ENCODE measurements at regions of chr1 and their contacts with region 1.

Region 1: GRCh38 chr1:145845514-145846161 is at the start of gene NUDT17:
- DNase-seq: peak; percentile 79
- H3K4me3 Mint-ChIP-seq: no peak within 1 kb of the TSS
- H3K27ac Mint-ChIP-seq: no peak within 1 kb of the TSS
- H3K4me1 Mint-ChIP-seq: peaks cover 11% of the 10 kb centered on the region
- H3K27me3 Mint-ChIP-seq: no peaks in the 10 kb centered on the region
- total RNA-seq, gene NUDT17: 2.7 to 3.4 TPM

Region 2: GRCh38 chr1:145751491-145752037 is 94.1 kb before region 1 on chr1:
- CTCF ChIA-PET with region 1: no interaction called
- POLR2A ChIA-PET with region 1: no interaction called
- DNase-seq: no peak
- H3K4me3 Mint-ChIP-seq: no peak overlapping the region
- H3K27ac Mint-ChIP-seq: no peak overlapping the region
- H3K4me1 Mint-ChIP-seq: peaks cover 2% of the 10 kb centered on the region
- H3K27me3 Mint-ChIP-seq: no peaks in the 10 kb centered on the region

Region 3: GRCh38 chr1:145858894-145859490 is 13.4 kb after region 1 on chr1 and contains the start of gene PIAS3:
- CTCF ChIA-PET with region 1: interaction called, 141 read pairs
- POLR2A ChIA-PET with region 1: interaction called, 4 read pairs
- DNase-seq: peak; percentile 87
- H3K4me3 Mint-ChIP-seq: peak within 1 kb of the TSS; percentile 91
- H3K27ac Mint-ChIP-seq: peak within 1 kb of the TSS; percentile 88
- H3K4me1 Mint-ChIP-seq: peaks cover 24% of the 10 kb centered on the region
- H3K27me3 Mint-ChIP-seq: peaks cover 10% of the 10 kb centered on the region
- total RNA-seq, gene PIAS3: 17.9 to 18.8 TPM

Region 4: DNA sequence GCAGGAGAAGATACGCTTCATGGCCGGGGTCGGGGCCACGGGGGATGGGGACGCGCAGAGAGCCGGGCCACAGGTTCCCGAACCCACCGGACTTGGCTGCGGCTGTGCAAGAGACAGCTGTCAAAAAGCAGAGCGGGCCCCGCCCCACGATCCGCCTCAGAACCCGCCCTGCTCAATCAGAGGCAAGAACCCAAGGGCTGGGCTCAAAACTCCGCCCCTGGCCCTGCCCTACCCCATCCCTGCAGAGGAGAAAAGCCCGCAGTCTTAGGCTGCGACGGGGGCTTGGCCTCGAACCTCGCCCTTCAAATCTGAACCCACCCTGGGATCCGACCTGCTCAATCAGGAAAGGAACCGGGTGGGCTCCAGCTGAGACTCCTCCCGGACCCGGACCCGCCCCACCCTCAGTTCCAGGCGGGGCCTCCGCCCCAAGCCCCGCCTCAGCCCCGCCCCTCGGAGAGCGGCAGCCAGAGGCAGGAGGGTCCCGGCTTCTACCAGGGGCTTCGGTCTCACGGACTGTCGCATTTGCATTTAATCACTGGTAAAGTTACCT is 40.2 kb after region 1 on chr1 and contains the start of gene ANKRD35:
- CTCF ChIA-PET with region 1: interaction called, 11 read pairs
- POLR2A ChIA-PET with region 1: no interaction called
- DNase-seq: peak; percentile 92
- H3K4me3 Mint-ChIP-seq: peak within 1 kb of the TSS; percentile 77
- H3K27ac Mint-ChIP-seq: no peak within 1 kb of the TSS
- H3K4me1 Mint-ChIP-seq: peaks cover 14% of the 10 kb centered on the region
- H3K27me3 Mint-ChIP-seq: peaks cover 33% of the 10 kb centered on the region
- total RNA-seq, gene ANKRD35: 0.40 to 0.42 TPM

Region 5: DNA sequence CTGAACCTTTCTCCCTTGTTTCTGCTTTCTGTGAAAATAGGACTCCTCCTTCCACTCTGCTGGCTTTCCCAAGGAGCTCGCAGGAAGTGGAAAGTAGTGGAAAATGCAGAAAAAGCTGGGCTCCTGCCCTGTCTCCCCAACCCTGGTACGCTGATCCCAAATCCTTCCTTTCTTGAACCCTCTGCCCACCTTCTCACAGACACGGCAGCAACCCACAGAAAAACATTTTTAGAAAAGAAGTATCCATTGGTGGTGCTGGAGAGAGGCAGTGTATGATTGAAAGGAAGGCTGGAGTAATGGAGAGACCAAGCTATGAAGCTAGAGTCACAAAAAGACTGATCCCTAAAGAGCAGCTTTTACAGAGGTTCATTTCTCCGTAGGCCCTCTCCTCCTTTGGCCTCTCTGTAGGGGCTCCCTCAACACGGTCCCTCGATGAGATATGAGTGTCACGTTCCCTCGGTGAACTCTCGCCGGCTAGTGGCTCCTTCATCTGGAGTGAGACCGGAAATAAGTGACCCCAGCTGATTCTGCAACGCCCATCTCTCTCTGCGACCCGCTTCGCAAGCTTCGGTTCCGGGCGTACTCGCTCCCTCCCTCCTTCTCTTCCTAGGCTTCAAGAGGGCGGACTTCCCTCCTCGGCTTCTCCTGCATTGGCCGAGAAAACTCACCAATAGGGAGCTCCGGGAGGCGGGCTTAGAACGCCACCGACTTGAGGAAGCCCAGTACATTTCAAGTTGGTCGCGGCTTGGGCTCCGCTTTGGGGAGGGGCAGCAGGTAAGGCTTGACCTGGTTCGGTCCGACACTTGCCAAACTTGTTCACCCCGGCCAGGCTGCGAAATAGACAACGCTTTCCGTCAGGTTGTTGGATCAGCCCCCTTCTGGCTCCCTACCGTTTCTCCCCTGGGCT is 118.6 kb after region 1 on chr1 and contains the starts of genes ANKRD34A and POLR3GL:
- CTCF ChIA-PET with region 1: interaction called, 13 read pairs
- POLR2A ChIA-PET with region 1: no interaction called
- DNase-seq: peak; percentile 97
- H3K4me3 Mint-ChIP-seq: peak within 1 kb of the TSS; percentile 95
- H3K27ac Mint-ChIP-seq: peak within 1 kb of the TSS; percentile 89
- H3K4me1 Mint-ChIP-seq: peaks cover 54% of the 10 kb centered on the region
- H3K27me3 Mint-ChIP-seq: peaks cover 4% of the 10 kb centered on the region
- total RNA-seq, gene ANKRD34A: 2.0 to 2.2 TPM
- total RNA-seq, gene POLR3GL: 27.3 to 29.2 TPM

Region 6: GRCh38 chr1:146019231-146020057 is 173.8 kb after region 1 on chr1:
- CTCF ChIA-PET with region 1: interaction called, 17 read pairs
- POLR2A ChIA-PET with region 1: no interaction called
- DNase-seq: no peak
- H3K4me3 Mint-ChIP-seq: no peak overlapping the region
- H3K27ac Mint-ChIP-seq: no peak overlapping the region
- H3K4me1 Mint-ChIP-seq: peaks cover 7% of the 10 kb centered on the region
- H3K27me3 Mint-ChIP-seq: peaks cover 72% of the 10 kb centered on the region

Measured in activated CD4-positive, alpha-beta T cell treated with anti-CD3 and anti-CD28 coated beads, Interleukin-2, amount 10 ng/mL, durations not matched to agents 7 days and 5 days (primary cell).